H1 (cell line): ENCODE measurements at regions of chr1 and their contacts with region 1.

Region 1: DNA sequence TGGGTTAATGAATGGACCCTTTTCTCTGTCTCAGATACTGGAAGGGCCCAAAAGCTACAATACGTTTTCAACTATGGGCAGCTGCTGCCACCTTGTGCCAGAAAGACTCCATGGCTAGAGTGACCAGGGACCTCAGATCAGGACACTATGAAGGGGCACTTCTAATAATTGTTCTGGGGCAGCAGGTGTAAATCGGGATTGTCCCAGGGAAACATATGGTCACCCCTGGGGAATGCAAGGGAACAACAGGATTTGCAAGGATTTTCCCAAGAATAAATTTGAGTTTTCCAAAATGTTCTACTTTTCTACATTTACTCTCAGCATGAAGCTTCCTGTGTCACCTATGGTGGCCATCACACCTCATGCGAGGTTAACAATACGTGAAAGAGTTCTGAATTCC is 12.0 kb upstream of the FCAMR start:
- DNase-seq: peak in 1 of 2 experiments; percentile 65
- H3K4me3 ChIP-seq: no peak overlapping the region
- H3K27ac ChIP-seq: no peak overlapping the region
- H3K4me1 ChIP-seq: peaks cover 4 to 15% (median 8%) of the 10 kb centered on the region in 4 experiments
- H3K27me3 ChIP-seq: no peaks in the 10 kb centered on the region; a peak in 1 of 7 replicates
- CTCF ChIP-seq: peak; percentile 49 to 86 (median 76)
- EP300 ChIP-seq: no peak
- POLR2A ChIP-seq: no peak
- RAD21 ChIP-seq: peak; percentile 88 to 92

Region 2: GRCh38 chr1:206761159-206761768 is 221.0 kb before region 1 on chr1:
- CTCF ChIA-PET with region 1: interaction called, 11 read pairs
- POLR2A ChIA-PET with region 1: no interaction called
- DNase-seq: no peak
- H3K4me3 ChIP-seq: no peak overlapping the region
- H3K27ac ChIP-seq: no peak overlapping the region
- H3K4me1 ChIP-seq: no peaks in the 10 kb centered on the region
- H3K27me3 ChIP-seq: no peaks in the 10 kb centered on the region; a peak in 1 of 7 replicates
- CTCF ChIP-seq: peak in 1 of 3 experiments; percentile 39; a peak in 2 of 4 replicates
- EP300 ChIP-seq: no peak
- POLR2A ChIP-seq: no peak
- RAD21 ChIP-seq: no peak

Region 3: GRCh38 chr1:206865013-206865671 is 117.1 kb before region 1 on chr1 and contains the start of gene IL20:
- CTCF ChIA-PET with region 1: interaction called, 13 read pairs
- POLR2A ChIA-PET with region 1: no interaction called
- DNase-seq: peak; percentile 43 to 96
- H3K4me3 ChIP-seq: no peak within 1 kb of the TSS
- H3K27ac ChIP-seq: no peak within 1 kb of the TSS
- H3K4me1 ChIP-seq: no peaks in the 10 kb centered on the region
- H3K27me3 ChIP-seq: peaks cover 0 to 2% (median 0%) of the 10 kb centered on the region in 4 experiments; a peak in 1 of 7 replicates
- CTCF ChIP-seq: peak; percentile 93 to 99 (median 97)
- EP300 ChIP-seq: no peak
- POLR2A ChIP-seq: no peak
- RAD21 ChIP-seq: peak; percentile 61 to 74
- total RNA-seq, gene IL20: not detected in 2 replicates

Region 4: GRCh38 chr1:206882519-206882918 is 99.7 kb before region 1 on chr1:
- CTCF ChIA-PET with region 1: no interaction called
- POLR2A ChIA-PET with region 1: no interaction called
- DNase-seq: no peak
- H3K4me3 ChIP-seq: no peak overlapping the region
- H3K27ac ChIP-seq: no peak overlapping the region
- H3K4me1 ChIP-seq: no peaks in the 10 kb centered on the region
- H3K27me3 ChIP-seq: no peaks in the 10 kb centered on the region
- CTCF ChIP-seq: peak in 1 of 3 experiments; percentile 14; a peak in 1 of 4 replicates
- EP300 ChIP-seq: no peak
- POLR2A ChIP-seq: no peak
- RAD21 ChIP-seq: no peak

Region 5: GRCh38 chr1:206935491-206936067 is 46.6 kb before region 1 on chr1:
- CTCF ChIA-PET with region 1: interaction called, 188 read pairs
- POLR2A ChIA-PET with region 1: no interaction called
- DNase-seq: peak; percentile 58 to 83
- H3K4me3 ChIP-seq: no peak overlapping the region
- H3K27ac ChIP-seq: no peak overlapping the region
- H3K4me1 ChIP-seq: no peaks in the 10 kb centered on the region
- H3K27me3 ChIP-seq: no peaks in the 10 kb centered on the region
- CTCF ChIP-seq: peak; percentile 88 to 99 (median 88)
- EP300 ChIP-seq: no peak
- POLR2A ChIP-seq: no peak
- RAD21 ChIP-seq: peak; percentile 50 to 65

Region 6: DNA sequence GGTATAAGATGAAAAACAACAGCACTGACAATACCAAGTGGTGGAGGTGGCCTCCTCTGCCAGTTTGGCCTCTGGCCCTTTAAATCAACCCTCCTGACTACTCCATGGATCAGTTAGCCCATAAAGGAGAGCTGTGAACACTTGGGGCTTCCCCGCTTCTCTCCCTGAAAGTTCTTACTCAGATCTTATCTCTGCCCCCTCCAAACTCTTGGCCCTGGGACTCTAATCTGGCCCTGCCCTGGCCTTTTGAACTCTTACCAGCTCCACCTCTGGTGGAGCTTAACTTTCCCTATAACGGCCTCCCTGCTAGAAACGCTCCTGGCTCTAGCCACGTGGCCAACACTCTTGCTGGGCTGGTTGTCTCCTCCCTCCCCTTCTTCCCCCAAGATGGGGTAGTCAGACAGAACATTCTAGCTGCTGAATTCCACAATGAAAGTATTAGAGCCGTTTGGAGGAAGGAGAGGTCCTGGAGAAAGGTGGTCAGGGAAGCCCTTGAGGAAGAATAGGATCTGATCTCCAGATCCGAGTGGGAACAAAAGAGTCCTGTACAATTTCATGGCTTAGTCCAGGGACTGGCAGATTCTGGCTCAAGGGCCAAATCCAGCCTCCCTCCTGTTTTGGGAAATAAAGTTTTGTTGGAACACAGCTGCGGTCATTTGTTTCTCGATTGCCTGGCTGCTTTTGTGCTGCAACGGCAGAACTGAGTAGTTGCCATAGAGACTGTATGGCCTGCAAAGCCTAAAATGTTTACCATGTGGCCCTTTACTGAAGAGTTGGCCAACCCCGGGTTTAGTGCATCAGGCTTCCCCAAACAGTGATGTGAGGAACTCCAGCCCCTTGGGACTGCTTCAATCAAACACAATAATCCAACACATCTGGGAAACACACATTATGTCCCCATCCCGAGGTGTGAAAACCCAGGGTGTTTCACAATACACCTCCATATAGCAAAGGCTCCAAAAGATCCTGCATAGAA is 26.5 kb before region 1 on chr1:
- CTCF ChIA-PET with region 1: interaction called, 17 read pairs
- POLR2A ChIA-PET with region 1: no interaction called
- DNase-seq: no peak
- H3K4me3 ChIP-seq: no peak overlapping the region
- H3K27ac ChIP-seq: no peak overlapping the region
- H3K4me1 ChIP-seq: no peaks in the 10 kb centered on the region
- H3K27me3 ChIP-seq: peaks cover 0 to 3% (median 0%) of the 10 kb centered on the region in 4 experiments; a peak in 1 of 7 replicates
- CTCF ChIP-seq: no peak
- EP300 ChIP-seq: no peak
- POLR2A ChIP-seq: no peak
- RAD21 ChIP-seq: no peak

Region 7: DNA sequence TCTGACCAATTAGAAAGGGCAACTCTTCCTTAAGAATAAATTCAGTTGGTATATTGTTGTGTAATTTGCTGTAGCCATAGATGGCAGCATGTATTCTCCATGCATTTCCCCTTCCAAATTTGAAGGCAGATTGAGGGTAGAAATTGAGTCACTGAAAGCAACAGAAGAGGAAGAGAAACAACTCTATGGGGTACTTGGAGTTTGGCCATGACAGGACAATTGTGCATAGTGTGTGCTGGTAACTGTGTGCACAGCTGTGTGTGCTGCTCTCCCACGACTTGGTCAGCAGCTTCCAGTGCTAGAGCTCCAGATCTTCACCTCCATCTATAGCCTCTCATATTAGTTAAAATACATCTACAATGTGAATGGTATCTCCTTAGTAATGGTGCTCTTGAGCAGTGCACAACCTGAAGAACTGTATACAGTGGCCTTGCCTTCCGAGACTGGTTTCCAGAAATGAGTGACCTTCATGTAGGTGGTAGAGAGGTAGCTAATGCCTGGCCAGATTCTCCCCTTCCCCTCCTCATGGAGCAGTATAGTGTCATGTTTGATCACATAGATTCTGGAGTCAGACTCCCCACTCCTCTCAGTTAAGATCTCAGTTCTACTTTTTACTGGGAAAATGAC is 11.1 kb before region 1 on chr1:
- CTCF ChIA-PET with region 1: interaction called, 81 read pairs
- POLR2A ChIA-PET with region 1: no interaction called
- DNase-seq: no peak
- H3K4me3 ChIP-seq: no peak overlapping the region
- H3K27ac ChIP-seq: no peak overlapping the region
- H3K4me1 ChIP-seq: no peaks in the 10 kb centered on the region
- H3K27me3 ChIP-seq: no peaks in the 10 kb centered on the region
- CTCF ChIP-seq: no peak
- EP300 ChIP-seq: no peak
- POLR2A ChIP-seq: no peak
- RAD21 ChIP-seq: no peak

Region 8: DNA sequence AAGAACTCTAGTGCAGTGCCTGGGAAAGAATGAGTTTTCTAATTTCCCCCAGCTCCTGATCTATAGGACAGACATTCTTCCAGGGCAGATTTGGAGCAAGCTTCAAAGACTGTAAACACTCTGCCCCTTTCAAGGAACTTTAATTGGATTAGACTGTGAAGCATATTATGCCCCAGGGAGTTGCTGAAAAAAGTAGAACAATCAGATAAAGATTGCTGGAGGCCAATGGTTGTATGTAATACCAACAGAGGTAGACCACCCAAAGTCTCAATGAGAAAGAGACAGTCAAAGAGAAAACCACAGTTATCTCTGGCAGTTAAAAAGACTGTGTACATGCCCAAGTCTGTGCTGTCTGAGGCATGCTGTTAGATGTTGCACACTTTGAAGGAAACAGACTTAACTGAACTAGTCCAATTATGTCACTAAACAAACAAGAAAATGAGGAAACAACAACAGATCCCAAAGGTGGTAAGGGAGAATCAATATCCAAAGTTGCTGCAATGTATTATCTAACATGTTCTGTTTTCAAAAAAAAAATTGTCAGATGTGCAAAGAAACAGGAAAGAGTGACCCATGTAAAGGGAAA is 146.2 kb after region 1 on chr1:
- CTCF ChIA-PET with region 1: no interaction called
- POLR2A ChIA-PET with region 1: no interaction called
- DNase-seq: no peak
- H3K4me3 ChIP-seq: no peak overlapping the region
- H3K27ac ChIP-seq: no peak overlapping the region
- H3K4me1 ChIP-seq: no peaks in the 10 kb centered on the region
- H3K27me3 ChIP-seq: no peaks in the 10 kb centered on the region
- CTCF ChIP-seq: no peak
- EP300 ChIP-seq: no peak
- POLR2A ChIP-seq: no peak
- RAD21 ChIP-seq: no peak

Region 9: DNA sequence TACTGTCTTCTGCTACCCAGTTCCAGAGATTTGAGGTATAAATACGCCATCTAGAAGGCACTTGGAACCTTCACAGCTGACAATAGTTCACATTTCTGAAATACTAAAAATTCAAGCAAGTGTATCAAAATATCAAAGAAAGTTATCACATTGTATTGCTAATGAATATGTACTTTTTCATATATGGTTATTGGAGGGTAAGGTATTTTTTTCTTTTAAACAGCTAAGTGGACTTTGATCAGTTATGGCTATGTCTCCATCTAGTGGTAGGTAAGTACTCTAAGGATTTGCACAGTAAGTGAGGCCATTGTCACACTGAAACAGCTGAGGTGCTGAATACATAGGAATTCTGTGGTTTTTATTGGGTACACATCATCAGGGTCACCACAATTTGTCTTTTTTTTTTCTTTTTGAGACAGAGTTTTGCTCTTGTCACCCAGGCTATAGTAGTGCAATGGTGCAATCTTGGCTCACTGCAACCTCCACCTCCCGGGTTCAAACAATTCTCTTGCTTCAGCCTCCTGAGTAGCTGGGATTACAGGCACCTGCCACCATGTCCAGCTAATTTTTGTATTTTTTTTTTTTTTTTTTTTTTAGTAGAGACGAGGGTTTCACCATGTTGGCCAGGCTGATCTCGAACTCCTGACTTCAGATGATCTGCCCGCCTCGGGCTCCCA is 422.8 kb after region 1 on chr1:
- CTCF ChIA-PET with region 1: no interaction called
- POLR2A ChIA-PET with region 1: no interaction called
- DNase-seq: no peak
- H3K4me3 ChIP-seq: no peak overlapping the region
- H3K27ac ChIP-seq: no peak overlapping the region
- H3K4me1 ChIP-seq: no peaks in the 10 kb centered on the region; a peak in 1 of 7 replicates
- H3K27me3 ChIP-seq: no peaks in the 10 kb centered on the region
- CTCF ChIP-seq: peak in 2 of 3 experiments; percentile 50 to 69; a peak in 3 of 4 replicates
- EP300 ChIP-seq: no peak
- POLR2A ChIP-seq: no peak
- RAD21 ChIP-seq: peak; percentile 78